ENCODE measurements at regions of chr1 and their contacts with region 1.

Region 1: DNA sequence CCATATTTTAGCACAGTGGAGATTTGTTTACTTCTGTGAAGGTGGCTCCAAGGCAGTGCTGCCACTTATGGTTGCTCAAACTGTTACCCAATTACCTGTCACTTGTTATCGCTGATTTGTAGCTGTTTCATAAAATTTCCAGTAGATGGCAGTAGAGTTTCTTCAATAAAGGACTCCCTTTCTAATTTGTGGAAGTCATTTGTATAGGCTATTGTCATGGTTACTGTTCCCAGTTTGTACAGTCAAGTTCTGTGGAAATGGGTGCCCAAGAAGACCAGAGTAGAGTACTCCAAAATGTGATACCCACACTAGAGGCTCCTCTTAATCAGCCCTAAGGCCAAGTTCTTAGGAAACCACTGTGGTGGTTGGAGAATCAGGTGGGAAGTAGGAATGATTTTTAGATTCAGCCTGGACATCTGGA is 186.1 kb downstream of the CLEC20A start:
- DNase-seq: no peak
- ATAC-seq: peak; percentile 92

Region 2: GRCh38 chr1:178371235-178371634 is 60.5 kb after region 1 on chr1:
- intact Hi-C with region 1: no loop called
- DNase-seq: no peak
- ATAC-seq: no peak

Region 3: GRCh38 chr1:178501705-178502329 is 191.1 kb after region 1 on chr1:
- intact Hi-C with region 1: loop called in 1 of 2 experiments (anchors 2 kb)
- DNase-seq: peak; percentile 52 to 81
- ATAC-seq: peak; percentile 79

Measured in left colon (tissue), 2 donors.